ENCODE measurements at regions of chr9 and their contacts with region 1.

Region 1: GRCh38 chr9:72280913-72281500 is 84.0 kb downstream of the ZFAND5 start:
- DNase-seq: peak; percentile 49 to 81 (median 67)
- H3K4me3 ChIP-seq: no peak overlapping the region
- H3K27ac ChIP-seq: no peak overlapping the region
- H3K27me3 ChIP-seq: no peaks in the 10 kb centered on the region
- CTCF ChIP-seq: peak; percentile 56 to 97 (median 89)

Region 2: DNA sequence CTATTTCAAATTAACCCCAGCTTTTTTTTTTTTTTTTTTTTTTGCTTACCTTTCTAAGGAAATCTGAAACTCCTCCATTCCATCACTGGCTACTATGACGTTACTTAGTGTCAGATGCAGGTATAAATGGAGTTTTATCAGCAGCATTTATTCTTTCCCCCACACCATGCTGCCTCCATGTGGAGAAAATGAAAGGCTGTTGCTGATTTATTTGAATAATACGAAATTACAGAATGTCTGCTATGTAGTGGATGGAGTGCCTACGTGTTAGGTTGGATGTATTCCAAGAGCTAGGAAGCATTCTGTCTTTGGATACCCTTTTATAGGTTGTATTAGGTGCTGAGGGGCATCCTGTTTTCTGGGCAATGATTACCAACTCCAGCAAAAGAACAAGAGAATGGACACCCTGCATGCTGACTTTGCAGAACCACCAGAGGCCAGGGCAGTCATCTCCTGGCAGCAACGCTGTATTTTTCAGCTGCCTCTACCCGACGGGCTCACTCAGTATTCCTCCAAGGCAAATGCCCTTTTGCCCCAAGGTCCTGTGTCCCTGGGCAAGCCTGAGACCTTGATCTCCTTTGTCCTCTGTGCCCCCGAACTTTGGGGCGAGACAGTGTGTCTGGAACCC is 472.4 kb after region 1 on chr9:
- intact Hi-C with region 1: loop called in 1 of 2 experiments (anchors 2 kb)
- DNase-seq: peak in 2 of 10 donors; percentile 11 to 27
- H3K4me3 ChIP-seq: no peak overlapping the region
- H3K27ac ChIP-seq: no peak overlapping the region
- H3K27me3 ChIP-seq: peaks cover 0 to under 1% (median 0%) of the 10 kb centered on the region in 45 donors
- CTCF ChIP-seq: peak in 53 of 56 donors; percentile 14 to 72 (median 51)

Region 3: GRCh38 chr9:72817413-72817812 is 536.4 kb after region 1 on chr9:
- intact Hi-C with region 1: loop called (anchors 2 to 5 kb)
- DNase-seq: no peak
- H3K4me3 ChIP-seq: no peak overlapping the region
- H3K27ac ChIP-seq: no peak overlapping the region
- H3K27me3 ChIP-seq: no peaks in the 10 kb centered on the region
- CTCF ChIP-seq: no peak

Region 4: GRCh38 chr9:73118898-73119554 is 838.0 kb after region 1 on chr9:
- intact Hi-C with region 1: no loop called
- DNase-seq: no peak
- H3K4me3 ChIP-seq: no peak overlapping the region
- H3K27ac ChIP-seq: no peak overlapping the region
- H3K27me3 ChIP-seq: no peaks in the 10 kb centered on the region
- CTCF ChIP-seq: no peak

Measured in dorsolateral prefrontal cortex (tissue), 120 donors.